Activated CD4-positive, alpha-beta T cell treated with anti-CD3 and anti-CD28 coated beads for 36 hours (primary cell): ENCODE measurements at regions of chr17 and their contacts with region 1.

Region 1: DNA sequence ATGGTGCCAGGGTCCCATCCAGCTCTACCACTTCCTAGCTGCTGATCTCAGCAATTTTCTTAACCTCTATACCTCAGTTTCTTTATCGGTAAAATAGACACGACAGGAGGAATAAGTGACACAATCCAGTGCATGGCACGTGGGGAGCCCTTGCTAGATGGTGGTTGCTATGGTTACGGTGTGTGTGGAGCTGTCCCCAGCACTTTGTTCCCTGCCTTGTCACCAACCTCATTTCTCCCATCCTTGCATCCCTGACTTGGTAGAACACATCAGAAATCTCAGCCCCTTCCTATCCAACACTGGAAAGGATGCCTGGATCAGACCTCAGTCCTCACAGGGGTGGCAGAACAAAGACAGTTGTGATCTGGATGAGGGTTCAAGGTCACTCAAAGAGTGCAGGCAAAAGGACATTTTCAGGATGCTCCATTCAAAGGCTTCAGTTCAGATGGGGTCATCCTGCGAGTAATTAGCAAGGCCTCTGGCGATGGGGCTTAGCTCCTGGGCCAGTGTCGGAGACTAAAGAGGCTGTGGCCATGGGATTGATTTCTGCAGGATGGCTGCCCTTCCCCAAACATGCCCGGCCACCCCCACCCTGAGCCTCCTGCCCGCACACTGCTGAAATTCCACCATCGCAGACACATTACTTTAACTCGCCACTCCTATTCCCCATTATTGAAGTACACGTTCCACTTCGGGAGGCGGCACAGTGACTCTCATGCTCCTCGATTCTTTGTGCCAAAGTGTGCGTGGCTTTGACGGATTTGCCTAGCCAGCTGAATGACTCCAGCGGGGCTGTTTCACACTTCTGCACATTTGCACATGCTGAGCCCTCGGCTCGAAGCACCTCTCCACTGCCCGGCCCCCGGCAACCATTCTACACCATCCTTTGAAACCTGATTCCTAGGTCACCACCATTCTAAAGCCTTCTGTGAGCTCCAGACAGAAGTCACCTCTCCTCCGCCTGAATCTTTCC is 40.3 kb downstream of the WNT3 start:
- DNase-seq: no peak
- ATAC-seq: no peak
- H3K4me3 Mint-ChIP-seq: no peak overlapping the region
- H3K27ac Mint-ChIP-seq: no peak overlapping the region
- H3K4me1 Mint-ChIP-seq: no peaks in the 10 kb centered on the region
- H3K27me3 Mint-ChIP-seq: no peaks in the 10 kb centered on the region

Region 2: DNA sequence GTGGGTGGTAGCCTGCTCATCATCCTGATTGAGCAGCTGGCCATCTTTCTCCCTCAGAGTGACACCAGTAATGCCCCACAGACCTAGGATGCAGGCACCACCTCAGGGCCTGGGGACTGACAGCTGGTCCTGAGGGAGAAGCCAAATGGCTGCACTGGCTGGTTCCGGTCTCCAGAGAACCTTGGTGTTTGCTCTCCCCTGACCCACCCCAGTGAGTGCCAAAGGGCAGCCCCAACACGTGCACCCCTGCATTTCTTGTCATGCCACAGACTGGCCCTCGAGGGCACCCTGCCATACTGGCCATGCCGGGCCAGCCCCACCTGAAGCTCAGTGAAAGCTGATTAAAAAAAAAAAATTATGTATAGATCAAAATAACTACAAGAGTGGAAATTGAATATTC is 60.2 kb before region 1 on chr17:
- CTCF ChIA-PET with region 1: no interaction called
- POLR2A ChIA-PET with region 1: no interaction called
- intact Hi-C with region 1: no loop called
- DNase-seq: no peak
- ATAC-seq: no peak
- H3K4me3 Mint-ChIP-seq: no peak overlapping the region
- H3K27ac Mint-ChIP-seq: no peak overlapping the region
- H3K4me1 Mint-ChIP-seq: peaks cover 3% of the 10 kb centered on the region
- H3K27me3 Mint-ChIP-seq: no peaks in the 10 kb centered on the region

Region 3: DNA sequence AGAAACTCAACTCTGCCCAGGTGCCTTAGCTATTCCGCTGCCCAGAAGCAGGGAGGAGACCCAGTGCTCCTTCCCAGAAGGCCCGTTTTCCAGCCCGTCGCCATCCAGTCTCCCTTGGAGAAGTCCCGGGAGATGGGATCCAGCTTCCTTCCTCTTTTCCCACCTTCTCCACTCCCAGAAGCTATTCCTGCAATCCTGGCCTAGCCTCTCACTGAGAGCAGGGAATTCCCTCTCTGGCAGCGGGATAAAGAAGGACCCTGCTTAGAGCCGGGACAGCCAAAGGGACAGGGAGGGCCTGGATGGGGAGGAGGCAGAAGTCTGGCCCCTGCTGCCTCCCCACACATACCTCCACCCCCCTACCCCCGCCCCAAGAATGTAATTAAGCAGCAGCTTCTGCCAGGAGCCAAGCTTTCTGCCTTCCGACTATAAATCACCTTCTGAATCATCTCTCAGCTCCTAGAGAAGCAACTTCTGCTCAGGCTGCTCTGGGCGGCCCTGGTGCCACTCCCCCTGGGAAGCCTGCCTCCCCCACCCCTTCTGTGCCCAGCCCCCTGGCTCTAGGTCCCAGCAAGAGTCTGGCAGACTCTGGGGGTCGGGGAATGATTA is 33.9 kb after region 1 on chr17:
- CTCF ChIA-PET with region 1: no interaction called
- POLR2A ChIA-PET with region 1: no interaction called
- intact Hi-C with region 1: loop called in 1 of 2 experiments (anchors 5 kb)
- DNase-seq: no peak
- ATAC-seq: no peak
- H3K4me3 Mint-ChIP-seq: no peak overlapping the region
- H3K27ac Mint-ChIP-seq: no peak overlapping the region
- H3K4me1 Mint-ChIP-seq: peaks cover 2% of the 10 kb centered on the region
- H3K27me3 Mint-ChIP-seq: peaks cover 37% of the 10 kb centered on the region